ENCODE measurements at regions of chr1 and their contacts with region 1.

Region 1: DNA sequence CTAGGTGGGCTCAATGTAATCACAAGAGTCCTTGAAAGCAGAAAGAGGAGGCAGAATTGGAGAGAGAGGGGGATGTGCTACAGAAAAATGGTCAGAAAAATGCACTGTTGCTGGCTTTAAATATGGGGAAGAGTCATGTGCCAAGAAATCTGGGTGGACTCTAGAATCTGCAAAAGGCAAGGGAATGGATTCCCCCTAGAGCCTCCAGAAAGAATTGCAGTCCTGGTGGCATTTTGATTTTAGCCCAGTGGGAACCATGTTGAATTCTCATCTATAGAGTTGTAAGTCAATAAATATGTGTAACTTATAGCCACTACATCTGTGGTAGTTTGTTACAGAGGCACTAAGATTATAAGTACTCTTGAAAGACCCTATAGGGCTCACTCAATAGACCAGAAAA is 210.3 kb downstream of the ASTN1 start:
- DNase-seq: no peak
- H3K4me3 ChIP-seq: no peak overlapping the region
- H3K27ac ChIP-seq: no peak overlapping the region
- H3K4me1 ChIP-seq: peaks cover 0 to 11% (median 2%) of the 10 kb centered on the region in 4 experiments; a peak in 3 of 7 replicates
- H3K27me3 ChIP-seq: no peaks in the 10 kb centered on the region; a peak in 1 of 7 replicates
- CTCF ChIP-seq: peak in 2 of 3 experiments; percentile 24 to 48; a peak in 2 of 4 replicates
- EP300 ChIP-seq: no peak
- POLR2A ChIP-seq: no peak
- RAD21 ChIP-seq: peak in 1 of 2 experiments; percentile 33; a peak in 1 of 4 replicates

Region 2: DNA sequence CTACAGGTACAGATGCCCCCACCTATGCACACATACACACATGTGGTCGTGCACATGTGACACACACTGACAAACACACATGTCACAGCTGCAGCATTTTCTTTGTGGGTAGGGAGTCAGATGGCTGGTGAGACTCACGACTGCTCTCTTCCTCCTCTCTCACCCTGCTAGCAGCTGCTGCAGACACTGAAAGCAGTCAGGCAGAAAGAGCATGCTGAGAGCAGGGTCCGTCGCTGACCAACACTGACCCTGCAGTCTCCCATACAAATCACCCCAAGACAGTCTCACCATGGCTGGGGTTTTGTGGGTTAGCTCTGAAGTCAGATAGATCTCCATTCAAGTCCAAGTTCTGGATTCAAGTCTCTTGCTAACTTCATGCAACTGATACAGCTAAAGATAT is 22.0 kb after region 1 on chr1:
- CTCF ChIA-PET with region 1: interaction called, 16 read pairs
- POLR2A ChIA-PET with region 1: no interaction called
- DNase-seq: no peak
- H3K4me3 ChIP-seq: no peak overlapping the region
- H3K27ac ChIP-seq: no peak overlapping the region
- H3K4me1 ChIP-seq: no peaks in the 10 kb centered on the region
- H3K27me3 ChIP-seq: no peaks in the 10 kb centered on the region
- CTCF ChIP-seq: no peak
- EP300 ChIP-seq: no peak
- POLR2A ChIP-seq: no peak
- RAD21 ChIP-seq: no peak

Region 3: DNA sequence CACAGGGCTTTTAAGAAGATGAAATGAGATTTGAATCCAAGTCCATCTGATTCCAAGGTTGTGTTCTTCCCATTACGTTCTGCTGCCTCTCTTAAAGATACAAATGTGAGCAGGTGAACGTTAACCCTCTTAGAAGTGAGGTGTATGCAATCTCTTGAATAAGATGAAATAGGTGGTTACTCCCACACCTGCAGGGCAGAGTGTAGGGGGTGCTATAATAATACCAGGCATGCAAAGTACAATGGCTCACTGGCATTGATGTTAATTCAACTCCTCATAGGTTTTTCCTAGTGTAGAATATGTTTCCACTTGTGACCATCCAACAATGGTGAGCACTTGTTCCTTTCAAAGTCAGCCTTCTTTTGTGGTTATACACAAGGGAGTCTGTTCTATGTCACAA is 47.3 kb after region 1 on chr1:
- CTCF ChIA-PET with region 1: no interaction called
- POLR2A ChIA-PET with region 1: no interaction called
- DNase-seq: no peak
- H3K4me3 ChIP-seq: no peak overlapping the region
- H3K27ac ChIP-seq: no peak overlapping the region
- H3K4me1 ChIP-seq: peaks cover 0 to 5% (median 2%) of the 10 kb centered on the region in 4 experiments; a peak in 5 of 7 replicates
- H3K27me3 ChIP-seq: no peaks in the 10 kb centered on the region
- CTCF ChIP-seq: no peak
- EP300 ChIP-seq: no peak
- POLR2A ChIP-seq: no peak
- RAD21 ChIP-seq: no peak

Measured in H1 (cell line).